ENCODE measurements at regions of chr5 and their contacts with region 1.

Region 1: GRCh38 chr5:40914835-40915234 is 5.5 kb downstream of the C7 start:
- DNase-seq: no peak
- ATAC-seq: peak in 6 of 8 donors; percentile 38 to 77 (median 54)
- H3K4me3 ChIP-seq: peak overlapping the region in 8 of 10 donors; percentile 2 to 41 (median 28)
- H3K27ac ChIP-seq: peak overlapping the region in 8 of 10 donors; percentile 6 to 65 (median 37)
- H3K4me1 ChIP-seq: peaks cover 0 to 46% (median 9%) of the 10 kb centered on the region in 9 donors
- H3K27me3 ChIP-seq: no peaks in the 10 kb centered on the region
- CTCF ChIP-seq: no peak

Region 2: GRCh38 chr5:40962208-40962955 is 47.5 kb after region 1 on chr5:
- intact Hi-C with region 1: loop called in 2 of 10 experiments (anchors 5 kb)
- DNase-seq: no peak
- ATAC-seq: peak in 2 of 8 donors; percentile 18 to 50
- H3K4me3 ChIP-seq: no peak overlapping the region
- H3K27ac ChIP-seq: no peak overlapping the region
- H3K4me1 ChIP-seq: no peaks in the 10 kb centered on the region
- H3K27me3 ChIP-seq: no peaks in the 10 kb centered on the region
- CTCF ChIP-seq: peak in 2 of 9 donors; percentile 6 to 39

Region 3: GRCh38 chr5:41009232-41009631 is 94.4 kb after region 1 on chr5:
- intact Hi-C with region 1: no loop called
- DNase-seq: no peak
- ATAC-seq: peak in 1 of 8 donors; percentile 86
- H3K4me3 ChIP-seq: no peak overlapping the region
- H3K27ac ChIP-seq: no peak overlapping the region
- H3K4me1 ChIP-seq: peaks cover 0 to 5% (median 0%) of the 10 kb centered on the region in 9 donors
- H3K27me3 ChIP-seq: no peaks in the 10 kb centered on the region
- CTCF ChIP-seq: no peak